ENCODE measurements at regions of chr9 and their contacts with region 1.

Region 1: GRCh38 chr9:3385871-3386270 is 139.9 kb downstream of the RFX3 start:
- DNase-seq: peak; percentile 19
- H3K4me3 Mint-ChIP-seq: no peak overlapping the region
- H3K27ac Mint-ChIP-seq: peak overlapping the region; percentile 64
- H3K4me1 Mint-ChIP-seq: peaks cover 28% of the 10 kb centered on the region
- H3K27me3 Mint-ChIP-seq: no peaks in the 10 kb centered on the region

Region 2: DNA sequence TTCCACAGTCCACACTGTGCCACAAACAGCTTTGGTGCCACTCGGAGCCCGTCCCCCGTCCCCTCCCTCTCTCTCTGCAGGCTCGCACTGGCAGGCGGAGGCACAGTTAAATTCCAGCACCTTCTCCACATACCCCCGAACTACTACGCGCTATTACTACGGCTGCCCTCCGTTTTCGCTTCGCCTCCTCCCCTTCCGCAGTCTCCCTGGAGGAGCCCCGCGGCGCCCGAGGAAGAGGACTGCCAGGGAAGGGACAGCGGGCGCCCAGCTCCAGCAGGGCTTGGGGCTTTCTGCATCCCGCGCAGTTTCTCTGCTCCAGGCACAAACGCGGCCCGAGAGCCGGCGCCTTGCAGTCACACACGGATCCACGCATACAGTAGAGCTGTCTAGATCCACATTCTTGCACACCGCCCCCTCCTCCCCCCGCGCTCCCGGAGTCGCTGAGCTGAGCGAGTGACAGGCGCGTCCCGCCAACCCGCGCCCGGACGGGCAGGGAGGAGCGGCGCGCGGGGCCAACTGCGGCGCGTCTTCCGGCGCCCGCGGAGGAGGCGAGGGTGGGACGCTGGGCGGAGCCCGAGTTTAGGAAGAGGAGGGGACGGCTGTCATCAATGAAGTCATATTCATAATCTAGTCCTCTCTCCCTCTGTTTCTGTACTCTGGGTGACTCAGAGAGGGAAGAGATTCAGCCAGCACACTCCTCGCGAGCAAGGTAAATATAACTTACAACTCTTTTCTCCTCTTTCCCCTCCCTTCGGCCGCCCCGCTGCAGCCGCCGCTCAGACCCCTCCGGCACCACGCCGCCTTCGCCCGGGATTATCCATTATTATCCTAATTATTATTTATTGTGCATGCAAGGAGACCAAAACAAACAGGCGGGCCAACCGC is 1370.9 kb before region 1 on chr9 and contains the start of gene SMARCA2:
- intact Hi-C with region 1: loop called (anchors 10 kb)
- DNase-seq: peak; percentile 97
- H3K4me3 Mint-ChIP-seq: peak within 1 kb of the TSS; percentile 99
- H3K27ac Mint-ChIP-seq: peak within 1 kb of the TSS; percentile 99
- H3K4me1 Mint-ChIP-seq: peaks cover 44% of the 10 kb centered on the region
- H3K27me3 Mint-ChIP-seq: peaks cover 5% of the 10 kb centered on the region
- total RNA-seq, gene SMARCA2: 105 and 108 TPM in 2 replicates

Region 3: DNA sequence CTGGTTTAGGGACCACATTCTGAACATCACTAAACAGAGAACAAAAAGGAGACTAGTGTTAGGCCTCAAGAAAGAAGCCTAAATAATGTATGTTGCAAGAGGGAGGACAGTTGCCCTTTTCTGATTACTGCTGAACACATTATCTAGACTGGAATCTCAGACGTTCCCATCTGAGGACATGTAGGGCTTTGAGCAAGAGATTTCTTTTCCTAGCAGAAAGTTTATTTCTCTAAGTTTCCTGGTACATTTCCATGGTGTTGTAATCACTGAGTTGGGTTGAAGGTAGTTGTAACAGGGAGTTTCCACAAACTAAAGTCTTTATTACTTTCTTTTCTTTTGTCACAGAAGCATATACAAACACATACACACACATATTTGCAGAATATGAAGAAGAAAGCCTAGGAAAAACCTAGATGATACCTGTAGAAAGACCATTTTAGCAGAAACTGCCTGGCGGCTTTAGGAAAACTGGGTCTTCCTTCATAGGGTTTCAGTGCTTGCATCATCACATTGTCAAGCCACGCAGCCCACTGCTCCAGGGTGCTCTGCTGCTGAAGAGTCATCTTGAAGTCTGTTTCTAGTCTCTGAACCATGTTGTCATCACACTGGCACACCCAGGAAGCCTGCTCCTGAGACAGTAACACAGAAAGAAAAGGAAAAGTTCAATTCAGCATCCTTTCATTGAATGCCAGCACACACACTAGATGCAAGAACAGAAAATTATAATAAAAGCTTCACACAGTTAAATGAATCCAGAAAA is 129.1 kb before region 1 on chr9:
- intact Hi-C with region 1: loop called (anchors 5 kb)
- DNase-seq: no peak
- H3K4me3 Mint-ChIP-seq: no peak overlapping the region
- H3K27ac Mint-ChIP-seq: no peak overlapping the region
- H3K4me1 Mint-ChIP-seq: peaks cover 16% of the 10 kb centered on the region
- H3K27me3 Mint-ChIP-seq: no peaks in the 10 kb centered on the region

Region 4: DNA sequence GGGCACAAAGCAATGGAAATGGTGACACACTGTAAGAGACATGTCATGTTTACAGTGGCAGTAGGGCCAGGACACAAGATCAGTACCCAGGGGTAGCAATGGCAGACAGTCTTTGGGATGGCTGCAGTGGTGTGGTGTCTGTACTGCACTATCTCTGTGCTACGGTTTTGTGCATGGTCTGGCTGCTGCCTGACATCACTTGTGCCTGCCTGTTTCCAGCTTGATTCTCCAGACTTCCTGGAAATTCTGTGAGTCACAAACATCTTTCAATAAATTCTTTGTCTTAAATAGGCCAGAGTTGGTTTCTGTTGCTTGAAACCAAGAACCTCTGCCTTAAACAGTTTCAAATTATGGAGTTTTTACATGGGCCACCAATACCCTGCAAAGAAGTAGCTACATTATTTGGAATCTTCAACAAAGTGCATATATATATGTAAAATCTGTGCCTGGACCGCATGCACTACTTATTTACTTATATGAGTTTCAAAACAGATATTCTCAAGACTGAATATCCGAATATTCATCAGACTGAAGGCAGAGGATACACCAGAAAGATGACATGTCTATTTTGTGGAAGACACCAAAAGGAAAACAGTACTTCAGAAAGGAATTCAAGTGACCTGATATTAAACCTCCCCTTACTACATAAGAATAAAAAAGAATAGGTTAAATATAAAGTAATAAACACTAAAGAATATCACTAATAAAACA is 48.2 kb before region 1 on chr9:
- intact Hi-C with region 1: loop called (anchors 1 kb)
- DNase-seq: no peak
- H3K4me3 Mint-ChIP-seq: no peak overlapping the region
- H3K27ac Mint-ChIP-seq: peak overlapping the region; percentile 1
- H3K4me1 Mint-ChIP-seq: peaks cover 28% of the 10 kb centered on the region
- H3K27me3 Mint-ChIP-seq: no peaks in the 10 kb centered on the region

Region 5: DNA sequence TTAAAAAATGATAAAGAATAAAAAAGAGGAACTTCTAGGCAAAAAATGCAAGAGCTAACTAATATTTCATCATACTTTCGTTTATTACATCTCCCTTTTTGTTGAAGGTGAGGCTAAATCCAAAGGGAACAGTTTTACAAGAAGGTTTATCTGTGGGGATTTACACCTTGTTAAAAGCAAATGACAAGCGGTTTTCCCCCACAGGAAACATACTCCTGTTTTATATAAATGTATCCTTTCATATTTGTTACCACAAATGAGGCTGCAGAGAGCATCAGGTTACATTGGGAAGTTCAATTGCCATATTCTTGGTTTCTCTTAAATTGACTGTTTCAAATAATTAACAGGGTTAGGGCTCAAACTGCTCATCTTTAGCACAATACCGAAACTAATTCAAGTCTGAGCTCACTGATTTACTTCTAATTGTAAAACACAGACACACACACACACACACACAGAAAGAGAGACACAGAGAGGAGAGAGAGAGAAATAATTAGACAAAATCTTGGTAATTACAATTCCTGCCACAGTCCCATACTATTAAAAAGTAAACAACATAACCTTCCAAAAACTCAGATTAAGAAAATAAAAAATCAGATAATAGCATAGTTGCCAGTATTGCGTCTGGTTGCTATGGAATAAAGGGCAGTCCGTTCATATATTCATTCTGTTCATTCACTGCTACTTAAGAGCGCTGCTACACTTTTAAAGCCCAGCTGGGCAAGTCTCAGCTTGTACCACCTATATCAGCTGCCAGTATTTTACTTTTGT is 122.8 kb after region 1 on chr9:
- intact Hi-C with region 1: loop called (anchors 5 kb)
- DNase-seq: no peak
- H3K4me3 Mint-ChIP-seq: no peak overlapping the region
- H3K27ac Mint-ChIP-seq: no peak overlapping the region
- H3K4me1 Mint-ChIP-seq: peaks cover 34% of the 10 kb centered on the region
- H3K27me3 Mint-ChIP-seq: no peaks in the 10 kb centered on the region

Region 6: GRCh38 chr9:4306066-4306775 is 920.4 kb after region 1 on chr9:
- intact Hi-C with region 1: loop called (anchors 5 kb)
- DNase-seq: no peak
- H3K4me3 Mint-ChIP-seq: peak overlapping the region; percentile 40
- H3K27ac Mint-ChIP-seq: peak overlapping the region; percentile 76
- H3K4me1 Mint-ChIP-seq: peaks cover 58% of the 10 kb centered on the region
- H3K27me3 Mint-ChIP-seq: peaks cover 14% of the 10 kb centered on the region

Measured in activated T-helper 1 cell treated with anti-CD3 and anti-CD28 coated beads, Interleukin-12 subunit alpha, Interleukin-12 subunit beta, Interleukin-2, Interleukin-4 antibody, amounts not matched to agents 30 ng/mL and 10 ng/mL and 1 ng/mL, durations not matched to agents 14 hours and 24 hours and 36 hours (primary cell).